Activated T-helper 2 cell treated with anti-CD3 and anti-CD28 coated beads, Interferon-gamma antibody, Interleukin-2, Interleukin-4, amounts not matched to agents 10 μg/mL and 5 μg/mL and 100 μg/mL, durations not matched to agents 14 hours and 24 hours and 36 hours (primary cell): ENCODE measurements at regions of chr7 and their contacts with region 1.

Region 1: DNA sequence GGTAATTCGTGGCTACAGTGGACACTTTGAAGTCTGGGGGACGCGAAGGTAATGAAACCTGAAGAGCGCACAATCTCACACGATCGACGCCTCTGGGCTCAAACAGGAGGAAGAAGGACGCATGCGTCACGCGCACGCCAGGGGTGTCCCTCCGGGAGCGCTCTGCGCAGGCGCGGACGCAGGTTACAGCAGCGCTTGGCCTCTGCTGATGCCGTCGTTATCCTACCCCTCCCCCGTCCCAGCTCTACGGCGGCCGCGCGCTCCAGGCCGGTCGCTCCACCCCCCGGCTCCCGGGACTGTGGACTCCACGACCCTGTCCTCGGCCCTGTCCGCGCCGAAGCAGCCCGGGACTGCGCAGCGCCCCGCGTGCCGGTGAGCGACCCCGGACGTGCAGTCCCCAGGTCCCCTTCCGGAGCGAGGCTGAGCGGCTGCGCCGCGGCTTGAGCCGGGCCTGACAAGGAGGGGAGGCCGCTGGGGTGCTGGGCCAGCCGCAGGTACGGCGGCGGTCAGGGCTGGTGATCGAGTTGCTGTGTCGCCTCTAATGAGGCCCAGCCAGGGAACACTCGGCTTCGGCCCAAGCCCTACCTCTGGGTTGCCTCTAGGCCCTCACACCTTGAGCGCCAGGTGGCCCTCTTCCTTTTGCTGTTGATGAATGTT is at the start of gene TMEM106B:
- DNase-seq: peak; percentile 95
- H3K4me3 Mint-ChIP-seq: peak within 1 kb of the TSS; percentile 97
- H3K27ac Mint-ChIP-seq: peak within 1 kb of the TSS; percentile 90
- H3K4me1 Mint-ChIP-seq: peaks cover 31% of the 10 kb centered on the region
- H3K27me3 Mint-ChIP-seq: peaks cover 13% of the 10 kb centered on the region
- total RNA-seq, gene TMEM106B: 23.9 and 24.1 TPM in 2 replicates

Region 2: GRCh38 chr7:12139409-12139808 is 71.8 kb before region 1 on chr7:
- intact Hi-C with region 1: loop called (anchors 1 kb)
- DNase-seq: no peak
- H3K4me3 Mint-ChIP-seq: no peak overlapping the region
- H3K27ac Mint-ChIP-seq: no peak overlapping the region
- H3K4me1 Mint-ChIP-seq: peaks cover 15% of the 10 kb centered on the region
- H3K27me3 Mint-ChIP-seq: peaks cover 7% of the 10 kb centered on the region

Region 3: DNA sequence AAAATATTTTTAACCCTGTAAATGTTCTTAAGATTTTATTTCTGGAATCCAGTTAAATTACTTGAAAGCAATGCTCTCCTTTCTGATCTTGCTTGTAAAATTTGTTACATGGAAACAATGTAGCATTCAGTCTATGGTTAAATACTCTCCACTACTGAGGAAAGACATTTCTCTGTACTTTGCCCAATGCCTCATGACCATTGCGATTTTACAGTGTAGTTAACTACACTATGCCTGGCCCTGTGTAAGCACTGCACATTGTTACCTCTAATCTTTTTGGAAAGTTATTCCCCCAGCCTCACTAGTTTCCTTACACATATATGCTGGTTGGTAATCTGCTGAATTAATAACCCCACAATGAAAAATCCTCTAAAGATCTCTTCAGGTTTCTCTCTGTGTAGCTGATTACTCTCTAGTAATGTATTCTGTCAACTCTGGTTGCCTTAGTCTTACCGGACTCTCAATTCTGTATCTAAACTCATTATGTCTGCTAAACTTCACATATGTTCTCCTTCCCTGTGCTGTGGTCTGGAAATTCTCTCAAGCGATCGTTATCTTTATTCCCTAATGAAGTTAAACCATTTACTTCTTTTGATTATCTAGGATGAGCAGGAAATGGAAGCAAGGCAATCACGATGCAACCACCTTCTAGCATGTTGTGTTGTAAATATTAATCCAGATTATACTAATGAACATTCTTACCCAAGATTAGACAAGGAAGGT is 58.8 kb before region 1 on chr7:
- intact Hi-C with region 1: no loop called
- DNase-seq: no peak
- H3K4me3 Mint-ChIP-seq: no peak overlapping the region
- H3K27ac Mint-ChIP-seq: no peak overlapping the region
- H3K4me1 Mint-ChIP-seq: no peaks in the 10 kb centered on the region
- H3K27me3 Mint-ChIP-seq: peaks cover 11% of the 10 kb centered on the region

Region 4: DNA sequence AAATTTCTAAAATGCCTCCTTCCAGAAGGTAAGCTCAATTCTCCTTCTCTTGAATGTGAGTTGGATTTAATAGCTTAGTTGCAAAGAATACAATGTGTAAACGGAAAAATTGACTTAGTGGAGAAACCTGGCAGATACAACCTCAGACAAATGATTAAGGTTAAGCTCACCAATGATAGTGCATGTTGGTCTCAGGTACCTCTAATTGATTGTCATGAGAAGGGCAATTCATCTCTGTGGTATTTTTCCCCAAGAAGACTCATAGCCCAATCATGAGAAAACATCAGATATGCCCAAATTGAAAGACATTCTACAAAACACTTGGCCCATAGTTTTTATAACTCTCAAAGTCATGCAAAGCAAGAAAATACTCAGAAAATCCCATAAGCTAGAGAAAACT is 36.3 kb before region 1 on chr7:
- intact Hi-C with region 1: no loop called
- DNase-seq: no peak
- H3K4me3 Mint-ChIP-seq: no peak overlapping the region
- H3K27ac Mint-ChIP-seq: no peak overlapping the region
- H3K4me1 Mint-ChIP-seq: peaks cover 10% of the 10 kb centered on the region
- H3K27me3 Mint-ChIP-seq: peaks cover 12% of the 10 kb centered on the region

Region 5: DNA sequence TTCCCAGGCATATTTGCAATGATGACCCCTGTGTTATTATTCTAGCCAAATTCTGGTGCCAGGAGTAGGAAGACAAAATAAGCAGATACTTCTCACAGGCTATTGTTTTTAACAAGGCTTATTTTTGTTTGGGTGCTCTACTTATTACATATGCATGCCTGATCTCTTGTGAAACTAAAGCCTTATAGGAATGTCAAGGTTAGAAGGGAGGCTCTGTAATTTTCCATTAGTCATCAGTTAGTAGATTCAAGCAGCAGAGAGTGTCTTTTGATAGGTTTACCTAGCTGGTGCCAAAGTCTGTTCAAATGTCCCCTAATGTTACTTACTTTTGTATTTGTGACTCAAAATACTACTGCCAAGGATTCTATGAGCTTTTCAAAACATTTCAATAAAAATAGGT is 11.8 kb before region 1 on chr7:
- intact Hi-C with region 1: no loop called
- DNase-seq: no peak
- H3K4me3 Mint-ChIP-seq: no peak overlapping the region
- H3K27ac Mint-ChIP-seq: no peak overlapping the region
- H3K4me1 Mint-ChIP-seq: no peaks in the 10 kb centered on the region
- H3K27me3 Mint-ChIP-seq: peaks cover 20% of the 10 kb centered on the region

Region 6: DNA sequence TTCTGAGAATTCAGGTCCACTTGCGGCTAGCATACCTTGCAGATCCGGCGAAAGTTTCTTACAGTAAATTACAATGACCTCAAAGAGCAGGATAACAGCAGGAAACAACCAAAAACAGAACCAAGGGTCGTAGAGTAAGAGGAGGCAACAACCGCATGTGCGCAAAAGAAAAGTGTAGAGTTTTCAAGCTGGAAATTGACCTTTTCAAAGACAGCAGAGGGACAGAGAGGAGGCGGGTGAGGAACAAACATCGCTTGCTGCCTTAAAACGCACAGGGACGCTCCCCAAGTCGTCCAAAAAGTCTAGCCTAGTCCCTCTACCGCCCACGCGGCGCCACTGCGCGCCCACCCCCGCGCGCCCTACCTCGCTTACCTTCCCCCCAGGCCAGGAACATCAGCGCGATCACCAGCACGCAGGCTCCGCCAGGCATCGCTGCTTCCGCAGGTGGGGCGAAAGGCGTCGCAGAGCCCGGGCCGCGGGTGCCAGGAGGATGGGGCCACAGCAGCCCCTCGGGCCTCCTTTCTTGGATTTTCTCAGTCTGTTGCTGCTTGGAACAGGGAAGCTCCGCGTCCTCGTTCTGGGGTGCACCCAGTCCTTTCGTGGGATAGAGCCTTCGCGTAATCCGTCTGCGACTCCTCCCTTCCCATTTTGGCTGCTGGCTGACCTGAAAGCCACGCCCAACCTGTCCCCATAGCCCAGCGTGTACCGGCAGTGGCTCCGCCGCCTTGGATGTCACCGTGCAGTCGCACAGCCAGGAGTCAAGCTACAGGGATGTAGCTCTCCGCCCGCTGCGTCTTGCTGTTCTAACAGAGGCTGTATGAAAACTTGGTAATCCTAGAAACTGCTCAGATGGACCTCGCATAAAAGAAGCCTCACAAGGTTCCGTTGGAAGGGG is 192.4 kb after region 1 on chr7 and contains the start of gene VWDE:
- intact Hi-C with region 1: loop called (anchors 5 kb)
- DNase-seq: peak; percentile 52
- H3K4me3 Mint-ChIP-seq: peak within 1 kb of the TSS; percentile 79
- H3K27ac Mint-ChIP-seq: peak within 1 kb of the TSS; percentile 81
- H3K4me1 Mint-ChIP-seq: peaks cover 20% of the 10 kb centered on the region
- H3K27me3 Mint-ChIP-seq: peaks cover 24% of the 10 kb centered on the region
- total RNA-seq, gene VWDE: 2.9 and 3.2 TPM in 2 replicates